PC-3 (cell line): ENCODE measurements at regions of chr11 and their contacts with region 1.

Region 1: GRCh38 chr11:64264371-64264852 is 13.1 kb downstream of the PLCB3 start:
- DNase-seq: no peak
- ATAC-seq: no peak
- H3K4me3 ChIP-seq: no peak overlapping the region
- H3K27ac ChIP-seq: no peak overlapping the region
- H3K4me1 ChIP-seq: peaks cover 22% of the 10 kb centered on the region
- H3K27me3 ChIP-seq: no peaks in the 10 kb centered on the region
- CTCF ChIP-seq: no peak

Region 2: GRCh38 chr11:64252003-64252872 is 12.2 kb before region 1 on chr11:
- CTCF ChIA-PET with region 1: interaction called, 8 read pairs
- POLR2A ChIA-PET with region 1: interaction called, 12 read pairs
- intact Hi-C with region 1: no loop called
- DNase-seq: peak; percentile 77
- ATAC-seq: peak; percentile 45
- H3K4me3 ChIP-seq: peak overlapping the region; percentile 85
- H3K27ac ChIP-seq: no peak overlapping the region
- H3K4me1 ChIP-seq: peaks cover 31% of the 10 kb centered on the region
- H3K27me3 ChIP-seq: no peaks in the 10 kb centered on the region
- CTCF ChIP-seq: peak; percentile 64